ENCODE measurements at regions of chr6 and their contacts with region 1.

Region 1: GRCh38 chr6:44655412-44656342 is 268.2 kb downstream of the CDC5L start:
- DNase-seq: peak; percentile 79
- H3K4me3 ChIP-seq: peak overlapping the region in 1 of 2 experiments; percentile 44; a peak in 1 of 4 replicates
- H3K27ac ChIP-seq: no peak overlapping the region
- H3K4me1 ChIP-seq: peaks cover 2 to 4% of the 10 kb centered on the region in 2 experiments; a peak in 3 of 4 replicates
- H3K27me3 ChIP-seq: no peaks in the 10 kb centered on the region
- CTCF ChIP-seq: peak; percentile 96
- EP300 ChIP-seq: no peak
- RAD21 ChIP-seq: peak; percentile 95

Region 2: DNA sequence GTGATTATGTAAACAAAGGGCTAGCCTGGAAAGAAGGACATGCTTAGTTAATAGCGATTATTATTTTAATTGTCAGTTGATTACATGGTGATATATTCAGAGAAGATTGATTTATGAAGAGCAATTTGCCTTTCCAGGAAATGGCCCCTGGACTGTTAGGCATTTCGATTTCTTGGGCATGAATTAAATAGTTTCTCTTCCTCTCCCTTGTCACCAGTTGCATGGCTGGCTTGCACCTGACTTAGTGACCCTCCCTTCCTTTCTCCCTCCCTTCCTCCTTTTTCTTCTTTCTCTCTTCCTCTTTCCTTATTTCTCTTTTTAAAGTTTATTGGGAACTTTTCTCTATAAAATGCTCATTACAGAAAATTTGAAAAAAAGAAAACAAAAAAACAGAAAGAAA is 32.7 kb before region 1 on chr6:
- CTCF ChIA-PET with region 1: no interaction called
- POLR2A ChIA-PET with region 1: no interaction called
- DNase-seq: no peak
- H3K4me3 ChIP-seq: no peak overlapping the region
- H3K27ac ChIP-seq: no peak overlapping the region
- H3K4me1 ChIP-seq: no peaks in the 10 kb centered on the region
- H3K27me3 ChIP-seq: no peaks in the 10 kb centered on the region; the same call in 1 of the 2 replicates
- CTCF ChIP-seq: no peak
- EP300 ChIP-seq: no peak
- RAD21 ChIP-seq: no peak

Region 3: DNA sequence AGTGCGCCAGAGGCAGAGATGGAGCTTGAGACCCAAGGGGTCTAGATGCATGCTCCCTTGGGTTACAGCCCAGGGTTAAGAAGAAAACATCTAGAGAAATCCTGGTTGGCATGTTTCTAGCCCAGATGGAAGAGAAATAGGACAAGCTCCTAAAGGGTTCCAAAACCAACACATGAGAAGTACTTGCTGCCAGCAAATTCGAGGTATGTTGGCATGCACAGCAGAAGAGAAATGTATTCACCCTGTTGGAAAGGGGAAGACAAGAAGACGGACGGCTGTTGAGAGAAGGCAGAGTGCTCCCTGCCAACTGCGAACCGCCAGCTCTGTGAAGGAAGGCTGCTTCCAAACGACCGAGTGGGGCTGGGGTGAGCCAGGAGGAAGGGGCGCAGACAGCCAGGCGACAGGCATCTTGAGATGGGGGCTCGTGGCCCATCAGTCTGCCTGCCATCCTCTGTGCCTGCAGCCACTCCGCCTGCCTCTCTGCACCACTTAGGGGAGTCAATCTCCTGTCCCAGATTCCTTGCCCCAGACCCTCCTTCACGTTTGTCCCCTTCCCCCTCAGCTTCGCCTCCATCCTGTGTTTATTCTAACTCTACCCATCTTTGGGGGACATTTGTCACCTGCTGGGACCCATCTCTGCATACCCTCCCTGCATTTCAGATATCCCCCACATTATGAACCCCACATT is 19.0 kb before region 1 on chr6:
- CTCF ChIA-PET with region 1: interaction called, 15 read pairs
- POLR2A ChIA-PET with region 1: no interaction called
- DNase-seq: no peak
- H3K4me3 ChIP-seq: no peak overlapping the region
- H3K27ac ChIP-seq: no peak overlapping the region
- H3K4me1 ChIP-seq: no peaks in the 10 kb centered on the region
- H3K27me3 ChIP-seq: no peaks in the 10 kb centered on the region
- CTCF ChIP-seq: no peak
- EP300 ChIP-seq: no peak
- RAD21 ChIP-seq: no peak

Region 4: GRCh38 chr6:44667668-44668390 is 12.2 kb after region 1 on chr6:
- CTCF ChIA-PET with region 1: interaction called, 39 read pairs
- POLR2A ChIA-PET with region 1: no interaction called
- DNase-seq: no peak
- H3K4me3 ChIP-seq: no peak overlapping the region
- H3K27ac ChIP-seq: peak overlapping the region; percentile 78 to 86
- H3K4me1 ChIP-seq: peaks cover 34 to 51% of the 10 kb centered on the region in 2 experiments
- H3K27me3 ChIP-seq: no peaks in the 10 kb centered on the region
- CTCF ChIP-seq: peak; percentile 55
- EP300 ChIP-seq: no peak
- RAD21 ChIP-seq: no peak; the same call in 1 of the 2 replicates

Region 5: GRCh38 chr6:44701637-44702101 is 46.0 kb after region 1 on chr6:
- CTCF ChIA-PET with region 1: interaction called, 13 read pairs
- POLR2A ChIA-PET with region 1: no interaction called
- DNase-seq: no peak
- H3K4me3 ChIP-seq: no peak overlapping the region
- H3K27ac ChIP-seq: no peak overlapping the region
- H3K4me1 ChIP-seq: peaks cover 0 to 3% of the 10 kb centered on the region in 2 experiments; a peak in 1 of 4 replicates
- H3K27me3 ChIP-seq: no peaks in the 10 kb centered on the region
- CTCF ChIP-seq: no peak
- EP300 ChIP-seq: no peak
- RAD21 ChIP-seq: no peak

Region 6: GRCh38 chr6:45714741-45715507 is 1059.2 kb after region 1 on chr6:
- CTCF ChIA-PET with region 1: interaction called, 45 read pairs
- POLR2A ChIA-PET with region 1: no interaction called
- DNase-seq: peak; percentile 51
- H3K4me3 ChIP-seq: peak overlapping the region in 1 of 2 experiments; percentile 8; a peak in 1 of 4 replicates
- H3K27ac ChIP-seq: no peak overlapping the region
- H3K4me1 ChIP-seq: peaks cover 0 to 13% of the 10 kb centered on the region in 2 experiments; a peak in 1 of 4 replicates
- H3K27me3 ChIP-seq: no peaks in the 10 kb centered on the region
- CTCF ChIP-seq: peak; percentile 90
- EP300 ChIP-seq: no peak
- RAD21 ChIP-seq: peak; percentile 94

Measured in SK-N-SH (cell line).